Panc1 (cell line): ENCODE measurements at regions of chr3 and their contacts with region 1.

Region 1: GRCh38 chr3:126180477-126181397 is at the start of gene ALDH1L1:
- DNase-seq: no peak
- ATAC-seq: peak; percentile 82
- H3K4me3 ChIP-seq: peak within 1 kb of the TSS; percentile 31 to 46
- H3K27ac ChIP-seq: no peak within 1 kb of the TSS
- H3K4me1 ChIP-seq: no peaks in the 10 kb centered on the region
- H3K27me3 ChIP-seq: peaks cover 14% of the 10 kb centered on the region
- CTCF ChIP-seq: no peak
- total RNA-seq, gene ALDH1L1: 0.36 TPM

Region 2: GRCh38 chr3:126380011-126380768 is 199.5 kb after region 1 on chr3:
- CTCF ChIA-PET with region 1: interaction called, 13 read pairs
- POLR2A ChIA-PET with region 1: no interaction called
- in situ Hi-C with region 1: no loop called
- intact Hi-C with region 1: no loop called
- DNase-seq: no peak
- ATAC-seq: no peak
- H3K4me3 ChIP-seq: no peak overlapping the region
- H3K27ac ChIP-seq: no peak overlapping the region
- H3K4me1 ChIP-seq: no peaks in the 10 kb centered on the region
- H3K27me3 ChIP-seq: no peaks in the 10 kb centered on the region
- CTCF ChIP-seq: no peak